ENCODE measurements at regions of chr21 and their contacts with region 1.

Region 1: GRCh38 chr21:42973991-42974831 is at the start of gene PKNOX1:
- DNase-seq: peak; percentile 98 to 100 (median 99)
- ATAC-seq: peak; percentile 91
- H3K4me3 ChIP-seq: peak within 1 kb of the TSS; percentile 85
- H3K4me3 Mint-ChIP-seq: peak within 1 kb of the TSS; percentile 78 to 93 (median 88)
- H3K27ac ChIP-seq: peak within 1 kb of the TSS; percentile 94
- H3K27ac Mint-ChIP-seq: peak within 1 kb of the TSS; percentile 78 to 95 (median 93)
- H3K4me1 ChIP-seq: peaks cover 7 to 11% of the 10 kb centered on the region in 2 donors
- H3K4me1 Mint-ChIP-seq: peaks cover 0 to 36% (median 29%) of the 10 kb centered on the region in 7 donors
- H3K27me3 ChIP-seq: no peaks in the 10 kb centered on the region
- H3K27me3 Mint-ChIP-seq: no peaks in the 10 kb centered on the region
- total RNA-seq, gene PKNOX1: 14.7 to 24.7 (median 20.8) TPM

Region 2: DNA sequence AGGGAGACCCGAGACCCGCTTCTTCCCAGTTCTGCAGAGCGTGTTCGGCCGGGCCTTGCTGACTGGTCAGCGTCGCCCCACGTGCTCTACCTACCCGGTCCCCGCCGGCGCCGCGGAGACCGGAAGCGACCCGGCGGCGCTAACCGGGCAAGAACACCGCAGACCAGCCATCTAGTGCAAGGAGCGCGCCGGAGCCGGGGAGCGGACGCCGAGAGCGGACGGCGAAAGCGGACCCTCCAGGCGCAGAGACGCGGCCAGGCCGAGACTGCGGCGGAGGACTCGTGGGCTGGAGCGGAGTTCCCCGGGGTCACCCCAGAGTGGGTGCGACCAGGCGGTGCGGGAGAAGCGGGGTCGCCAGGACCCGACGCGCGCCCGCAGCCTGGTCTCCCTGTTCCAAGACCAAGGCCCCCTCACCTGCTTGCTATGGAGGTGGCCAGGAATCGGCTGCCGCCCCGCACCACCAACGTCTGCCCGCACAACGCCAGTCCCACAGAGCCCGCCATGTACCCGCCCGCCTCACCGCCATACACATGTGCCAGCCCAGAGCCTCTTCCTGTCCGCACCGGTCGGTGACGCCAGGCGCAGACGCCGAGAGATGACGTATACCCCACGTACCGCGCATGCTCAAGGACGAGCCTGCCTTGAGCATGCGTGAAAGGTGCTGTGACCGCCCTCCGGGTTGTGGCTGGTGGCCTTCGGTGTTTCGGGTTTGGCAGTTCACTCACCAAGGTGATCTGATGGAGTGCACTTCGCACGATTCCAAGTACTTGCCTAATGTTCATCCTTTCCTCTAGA is 95.0 kb before region 1 on chr21 and contains the start of gene WDR4:
- CTCF ChIA-PET with region 1: no interaction called
- POLR2A ChIA-PET with region 1: no interaction called
- intact Hi-C with region 1: loop called in 1 of 2 experiments (anchors 1 kb)
- DNase-seq: peak; percentile 97 to 100 (median 99)
- ATAC-seq: peak; percentile 97
- H3K4me3 ChIP-seq: peak within 1 kb of the TSS; percentile 66
- H3K4me3 Mint-ChIP-seq: peak within 1 kb of the TSS; percentile 93 to 99 (median 97)
- H3K27ac ChIP-seq: peak within 1 kb of the TSS; percentile 85
- H3K27ac Mint-ChIP-seq: peak within 1 kb of the TSS; percentile 94 to 100 (median 98)
- H3K4me1 ChIP-seq: peaks cover 12 to 15% of the 10 kb centered on the region in 2 donors
- H3K4me1 Mint-ChIP-seq: peaks cover 17 to 41% (median 29%) of the 10 kb centered on the region in 7 donors
- H3K27me3 ChIP-seq: no peaks in the 10 kb centered on the region
- H3K27me3 Mint-ChIP-seq: peaks cover 0 to 6% (median 0%) of the 10 kb centered on the region in 5 donors
- total RNA-seq, gene WDR4: 24.4 to 39.1 (median 30.5) TPM

Region 3: GRCh38 chr21:42923541-42924432 is 50.4 kb before region 1 on chr21:
- CTCF ChIA-PET with region 1: no interaction called
- POLR2A ChIA-PET with region 1: no interaction called
- intact Hi-C with region 1: loop called (anchors 1 to 5 kb)
- DNase-seq: peak; percentile 19 to 84 (median 75)
- ATAC-seq: peak; percentile 91
- H3K4me3 ChIP-seq: peak overlapping the region; percentile 22
- H3K4me3 Mint-ChIP-seq: peak overlapping the region in 9 of 10 donors; percentile 25 to 85 (median 60)
- H3K27ac ChIP-seq: no peak overlapping the region
- H3K27ac Mint-ChIP-seq: peak overlapping the region; percentile 33 to 92 (median 75)
- H3K4me1 ChIP-seq: peaks cover 9 to 17% of the 10 kb centered on the region in 2 donors
- H3K4me1 Mint-ChIP-seq: peaks cover 10 to 25% (median 20%) of the 10 kb centered on the region in 7 donors
- H3K27me3 ChIP-seq: no peaks in the 10 kb centered on the region
- H3K27me3 Mint-ChIP-seq: no peaks in the 10 kb centered on the region

Region 4: GRCh38 chr21:42939582-42940410 is 34.4 kb before region 1 on chr21:
- CTCF ChIA-PET with region 1: no interaction called
- POLR2A ChIA-PET with region 1: no interaction called
- intact Hi-C with region 1: no loop called
- DNase-seq: no peak
- ATAC-seq: peak; percentile 31
- H3K4me3 ChIP-seq: no peak overlapping the region
- H3K4me3 Mint-ChIP-seq: no peak overlapping the region
- H3K27ac ChIP-seq: no peak overlapping the region
- H3K27ac Mint-ChIP-seq: no peak overlapping the region
- H3K4me1 ChIP-seq: no peaks in the 10 kb centered on the region
- H3K4me1 Mint-ChIP-seq: peaks cover 0 to 4% (median 0%) of the 10 kb centered on the region in 7 donors
- H3K27me3 ChIP-seq: no peaks in the 10 kb centered on the region
- H3K27me3 Mint-ChIP-seq: peaks cover 0 to 2% (median 0%) of the 10 kb centered on the region in 5 donors

Region 5: GRCh38 chr21:43667191-43667904 is 693.1 kb after region 1 on chr21:
- CTCF ChIA-PET with region 1: no interaction called
- POLR2A ChIA-PET with region 1: no interaction called
- intact Hi-C with region 1: loop called in 1 of 2 experiments (anchors 10 kb)
- DNase-seq: no peak
- ATAC-seq: no peak
- H3K4me3 ChIP-seq: no peak overlapping the region
- H3K4me3 Mint-ChIP-seq: peak overlapping the region in 6 of 10 donors; percentile 2 to 54 (median 28)
- H3K27ac ChIP-seq: no peak overlapping the region
- H3K27ac Mint-ChIP-seq: peak overlapping the region in 2 of 9 donors; percentile 30 to 59
- H3K4me1 ChIP-seq: peaks cover 0 to 4% of the 10 kb centered on the region in 2 donors
- H3K4me1 Mint-ChIP-seq: peaks cover 34 to 63% (median 46%) of the 10 kb centered on the region in 7 donors
- H3K27me3 ChIP-seq: no peaks in the 10 kb centered on the region
- H3K27me3 Mint-ChIP-seq: no peaks in the 10 kb centered on the region

Region 6: DNA sequence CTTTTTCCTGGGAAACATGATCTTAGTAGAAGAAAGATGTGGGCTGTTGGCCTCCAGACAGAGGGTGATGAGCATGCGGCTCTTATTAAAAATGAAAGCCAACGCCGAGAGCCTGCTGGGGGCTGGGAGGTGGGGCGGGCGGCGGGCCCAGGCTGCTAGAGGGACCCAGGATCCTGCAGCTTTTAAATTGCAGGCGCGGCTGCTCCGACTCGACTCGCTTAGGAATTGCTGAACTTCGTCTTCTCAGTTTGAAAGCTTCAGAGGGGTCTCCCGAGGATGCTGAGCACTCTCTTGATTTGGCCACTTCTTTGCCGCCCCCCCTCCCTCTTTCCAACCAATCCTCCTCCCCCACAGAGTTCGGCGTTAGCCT is 892.0 kb after region 1 on chr21:
- CTCF ChIA-PET with region 1: no interaction called
- POLR2A ChIA-PET with region 1: no interaction called
- intact Hi-C with region 1: loop called in 1 of 2 experiments (anchors 10 kb)
- DNase-seq: peak in 5 of 9 donors; percentile 17 to 44 (median 31)
- ATAC-seq: peak; percentile 42
- H3K4me3 ChIP-seq: peak overlapping the region; percentile 62
- H3K4me3 Mint-ChIP-seq: peak overlapping the region; percentile 79 to 89 (median 85)
- H3K27ac ChIP-seq: peak overlapping the region; percentile 72
- H3K27ac Mint-ChIP-seq: peak overlapping the region; percentile 77 to 91 (median 89)
- H3K4me1 ChIP-seq: peaks cover 18 to 21% of the 10 kb centered on the region in 2 donors
- H3K4me1 Mint-ChIP-seq: peaks cover 28 to 50% (median 41%) of the 10 kb centered on the region in 7 donors
- H3K27me3 ChIP-seq: no peaks in the 10 kb centered on the region
- H3K27me3 Mint-ChIP-seq: peaks cover 0 to 1% (median 0%) of the 10 kb centered on the region in 5 donors

Region 7: DNA sequence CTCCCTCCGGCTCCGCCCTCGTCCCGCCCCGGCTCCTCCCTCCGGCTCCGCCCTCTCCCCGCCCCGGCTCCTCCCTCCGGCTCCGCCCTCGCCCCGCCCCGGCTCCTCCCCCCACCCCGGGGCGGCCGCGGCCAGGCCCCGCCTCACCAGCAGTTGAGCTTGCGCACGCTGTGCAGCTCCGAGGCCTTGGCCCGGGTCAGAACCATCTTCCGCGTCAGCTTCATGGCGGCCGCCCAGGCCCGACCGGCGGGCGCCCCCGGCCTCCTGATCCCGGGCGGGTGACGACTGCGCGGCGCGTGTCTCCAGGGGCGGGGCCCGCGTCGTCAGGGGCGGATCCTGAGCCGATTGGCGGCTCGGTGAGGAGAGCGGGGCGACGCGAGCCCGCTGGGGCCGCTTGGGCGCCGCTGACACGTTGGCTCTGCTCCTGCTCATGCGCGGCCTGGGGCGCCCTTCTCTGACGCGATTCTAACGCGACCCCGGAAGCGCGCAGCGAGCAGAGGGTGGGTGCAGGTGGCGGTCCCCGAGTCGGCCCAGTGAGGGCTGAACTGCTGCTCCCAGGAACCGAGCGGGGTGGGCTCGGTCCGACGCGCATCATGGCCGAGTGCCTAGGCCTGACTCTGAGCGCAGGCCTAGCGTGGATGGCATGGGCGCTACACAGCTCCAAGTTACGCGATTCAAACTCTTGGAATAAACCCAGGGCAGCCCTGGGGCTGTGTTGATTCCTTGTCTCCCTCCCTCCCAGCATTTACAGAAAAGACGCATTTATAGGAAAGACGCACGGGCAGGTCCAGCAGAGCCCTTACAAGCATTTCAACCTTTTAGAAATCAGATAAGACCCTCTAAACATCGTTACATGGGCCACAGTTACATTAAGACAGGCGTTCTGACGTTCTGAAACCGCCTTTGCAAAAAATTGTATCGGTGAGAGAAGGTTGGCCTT is 1365.0 kb after region 1 on chr21 and contains the start of gene CFAP410:
- CTCF ChIA-PET with region 1: no interaction called
- POLR2A ChIA-PET with region 1: no interaction called
- intact Hi-C with region 1: loop called in 1 of 2 experiments (anchors 5 kb)
- DNase-seq: peak; percentile 94 to 97 (median 97)
- ATAC-seq: peak; percentile 92
- H3K4me3 ChIP-seq: peak within 1 kb of the TSS; percentile 97
- H3K4me3 Mint-ChIP-seq: peak within 1 kb of the TSS; percentile 85 to 95 (median 92)
- H3K27ac ChIP-seq: peak within 1 kb of the TSS; percentile 96
- H3K27ac Mint-ChIP-seq: peak within 1 kb of the TSS; percentile 95 to 100 (median 97)
- H3K4me1 ChIP-seq: peaks cover 10 to 15% of the 10 kb centered on the region in 2 donors
- H3K4me1 Mint-ChIP-seq: peaks cover 4 to 33% (median 24%) of the 10 kb centered on the region in 7 donors
- H3K27me3 ChIP-seq: no peaks in the 10 kb centered on the region
- H3K27me3 Mint-ChIP-seq: no peaks in the 10 kb centered on the region
- total RNA-seq, gene CFAP410: 20.8 to 66.7 (median 49.5) TPM